ENCODE measurements at regions of chr1 and their contacts with region 1.

Region 1: GRCh38 chr1:167721617-167722151 is at the start of gene MPZL1:
- DNase-seq: peak; percentile 98
- H3K4me3 ChIP-seq: peak within 1 kb of the TSS; percentile 99
- H3K27ac ChIP-seq: peak within 1 kb of the TSS; percentile 90
- H3K4me1 ChIP-seq: no peaks in the 10 kb centered on the region
- H3K27me3 ChIP-seq: no peaks in the 10 kb centered on the region
- CTCF ChIP-seq: no peak
- total RNA-seq, gene MPZL1: 112 to 144 TPM

Region 2: GRCh38 chr1:167599957-167600581 is 121.6 kb before region 1 on chr1:
- intact Hi-C with region 1: no loop called
- DNase-seq: peak; percentile 27
- H3K4me3 ChIP-seq: no peak overlapping the region
- H3K27ac ChIP-seq: no peak overlapping the region
- H3K4me1 ChIP-seq: no peaks in the 10 kb centered on the region
- H3K27me3 ChIP-seq: no peaks in the 10 kb centered on the region
- CTCF ChIP-seq: peak; percentile 46

Region 3: GRCh38 chr1:167803358-167804207 is 81.9 kb after region 1 on chr1:
- intact Hi-C with region 1: loop called (anchors 5 kb)
- DNase-seq: peak; percentile 94
- H3K4me3 ChIP-seq: no peak overlapping the region
- H3K27ac ChIP-seq: no peak overlapping the region
- H3K4me1 ChIP-seq: no peaks in the 10 kb centered on the region
- H3K27me3 ChIP-seq: no peaks in the 10 kb centered on the region
- CTCF ChIP-seq: peak; percentile 97

Measured in colonic mucosa (tissue), 4 donors.